ENCODE measurements at regions of chr1 and their contacts with region 1.

Region 1: DNA sequence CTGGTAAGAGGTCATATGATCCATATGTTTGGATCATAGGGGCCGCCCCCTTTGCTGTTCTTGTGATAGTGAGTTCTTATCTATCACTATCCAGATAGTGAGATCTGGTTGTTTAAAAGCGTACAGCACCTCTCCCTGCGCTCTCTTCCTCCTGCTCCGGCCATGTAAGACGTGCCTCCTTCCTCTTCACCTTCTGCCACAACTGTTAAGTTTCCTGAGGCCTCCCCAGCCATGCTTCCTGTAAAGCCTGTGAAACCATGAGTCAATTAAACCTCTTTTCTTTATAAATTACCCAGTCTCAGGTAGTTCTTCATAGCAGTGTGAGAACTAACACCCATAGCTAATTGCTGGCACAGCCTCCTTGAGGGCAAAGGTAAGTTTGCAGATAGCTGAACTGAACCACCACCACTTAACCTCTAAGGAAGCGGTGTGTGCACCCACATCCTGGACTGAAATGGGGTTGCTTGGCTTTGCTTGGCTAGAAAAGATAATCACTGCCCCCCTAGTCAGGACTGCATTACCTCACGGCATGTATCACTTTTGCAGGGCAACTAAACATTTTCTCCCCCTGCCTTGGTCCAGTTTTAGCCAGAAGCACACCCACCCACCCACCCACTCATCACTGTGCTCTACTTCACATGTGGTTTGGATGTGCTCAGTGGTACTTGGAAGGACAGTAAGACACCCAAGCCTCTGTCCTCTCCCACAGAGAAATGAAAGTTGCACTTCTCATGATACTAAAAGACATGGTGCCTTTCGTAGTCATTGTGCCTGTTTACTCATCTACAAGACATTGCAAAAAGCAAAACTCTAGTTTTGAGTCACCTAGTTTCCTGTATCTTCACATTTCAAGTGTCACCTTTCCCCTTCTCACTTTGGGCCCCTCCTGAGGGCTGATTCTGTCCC is 23.1 kb upstream of the PTAFR start:
- DNase-seq: peak; percentile 58 to 83 (median 68)
- H3K4me3 ChIP-seq: peak overlapping the region; percentile 62
- H3K4me3 Mint-ChIP-seq: peak overlapping the region; percentile 40 to 83 (median 74)
- H3K27ac ChIP-seq: peak overlapping the region; percentile 38
- H3K27ac Mint-ChIP-seq: peak overlapping the region; percentile 59 to 96 (median 90)
- H3K4me1 ChIP-seq: peaks cover 47% of the 10 kb centered on the region
- H3K4me1 Mint-ChIP-seq: peaks cover 46 to 51% (median 50%) of the 10 kb centered on the region in 3 donors
- H3K27me3 ChIP-seq: no peaks in the 10 kb centered on the region
- H3K27me3 Mint-ChIP-seq: peaks cover 0 to 2% of the 10 kb centered on the region in 2 donors

Region 2: GRCh38 chr1:28172713-28173150 is 26.8 kb before region 1 on chr1:
- CTCF ChIA-PET with region 1: interaction called, 3 read pairs
- POLR2A ChIA-PET with region 1: interaction called, 12 read pairs
- DNase-seq: peak in 2 of 5 donors; percentile 21 to 46
- H3K4me3 ChIP-seq: no peak overlapping the region
- H3K4me3 Mint-ChIP-seq: peak overlapping the region; percentile 8 to 81 (median 69)
- H3K27ac ChIP-seq: no peak overlapping the region
- H3K27ac Mint-ChIP-seq: peak overlapping the region in 6 of 8 donors; percentile 8 to 80 (median 53)
- H3K4me1 ChIP-seq: peaks cover 43% of the 10 kb centered on the region
- H3K4me1 Mint-ChIP-seq: peaks cover 43 to 59% (median 53%) of the 10 kb centered on the region in 3 donors
- H3K27me3 ChIP-seq: no peaks in the 10 kb centered on the region
- H3K27me3 Mint-ChIP-seq: no peaks in the 10 kb centered on the region

Region 3: GRCh38 chr1:28213315-28213714 is 13.7 kb after region 1 on chr1:
- CTCF ChIA-PET with region 1: no interaction called
- POLR2A ChIA-PET with region 1: no interaction called
- DNase-seq: no peak
- H3K4me3 ChIP-seq: no peak overlapping the region
- H3K4me3 Mint-ChIP-seq: no peak overlapping the region
- H3K27ac ChIP-seq: no peak overlapping the region
- H3K27ac Mint-ChIP-seq: no peak overlapping the region
- H3K4me1 ChIP-seq: no peaks in the 10 kb centered on the region
- H3K4me1 Mint-ChIP-seq: peaks cover 7 to 12% (median 11%) of the 10 kb centered on the region in 3 donors
- H3K27me3 ChIP-seq: no peaks in the 10 kb centered on the region
- H3K27me3 Mint-ChIP-seq: no peaks in the 10 kb centered on the region